Mammary epithelial cell (primary cell): ENCODE measurements at regions of chr16 and their contacts with region 1.

Region 1: GRCh38 chr16:24208710-24209109 is 47.4 kb upstream of the CACNG3 start:
- DNase-seq: no peak
- H3K4me3 ChIP-seq: no peak overlapping the region
- H3K27ac ChIP-seq: no peak overlapping the region
- H3K4me1 ChIP-seq: no peaks in the 10 kb centered on the region
- H3K27me3 ChIP-seq: no peaks in the 10 kb centered on the region
- CTCF ChIP-seq: no peak

Region 2: GRCh38 chr16:24246911-24247607 is 38.3 kb after region 1 on chr16:
- CTCF ChIA-PET with region 1: no interaction called
- dilution Hi-C with region 1: loop called (anchors 5 kb)
- in situ Hi-C with region 1: no loop called
- intact Hi-C with region 1: no loop called
- DNase-seq: no peak
- H3K4me3 ChIP-seq: no peak overlapping the region
- H3K27ac ChIP-seq: no peak overlapping the region
- H3K4me1 ChIP-seq: no peaks in the 10 kb centered on the region
- H3K27me3 ChIP-seq: no peaks in the 10 kb centered on the region
- CTCF ChIP-seq: no peak